A549 (cell line): ENCODE measurements at regions of chr3 and their contacts with region 1.

Region 1: DNA sequence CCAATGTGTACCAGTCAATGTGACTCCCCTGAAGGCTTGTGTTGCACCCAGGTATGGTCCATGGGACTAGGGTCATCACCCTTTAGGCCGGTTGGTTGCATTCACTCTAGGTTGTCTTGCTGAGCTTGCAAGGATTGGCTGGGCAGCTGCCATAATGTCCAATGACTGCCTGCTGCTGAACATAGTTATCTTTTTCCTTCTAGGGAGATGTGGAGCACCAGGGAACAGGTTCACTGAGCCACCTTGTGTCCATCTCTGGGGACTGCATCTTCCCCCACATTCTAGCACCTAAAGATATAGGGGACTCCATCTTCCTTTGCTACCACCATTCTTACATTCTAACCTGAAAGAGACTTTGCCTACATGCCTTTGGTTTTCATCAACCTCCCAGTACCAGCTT is 580.4 kb upstream of the TBL1XR1 start:
- DNase-seq: peak; percentile 2 to 31
- ATAC-seq: peak in 1 of 2 experiments; percentile 73; a peak in 3 of 6 replicates
- H3K4me3 ChIP-seq: no peak overlapping the region
- H3K27ac ChIP-seq: no peak overlapping the region
- H3K4me1 ChIP-seq: 0 out of 3 replicates have a peak, but pooled peaks cover 5% of the 10 kb centered on the region
- CTCF ChIP-seq: peak; percentile 16; the same call in 2 of the 3 replicates
- EP300 ChIP-seq: no peak
- POLR2A ChIP-seq: no peak
- RAD21 ChIP-seq: peak; percentile 35 to 61; a peak in 3 of 5 replicates

Region 2: GRCh38 chr3:177498037-177498856 is 279.5 kb before region 1 on chr3:
- CTCF ChIA-PET with region 1: no interaction called
- POLR2A ChIA-PET with region 1: interaction called, 10 read pairs
- DNase-seq: peak; percentile 10 to 36
- ATAC-seq: peak in 1 of 2 experiments; percentile 70; a peak in 2 of 6 replicates
- H3K4me3 ChIP-seq: no peak overlapping the region
- H3K27ac ChIP-seq: peak overlapping the region in 1 of 2 experiments; percentile 55; a peak in 2 of 6 replicates
- H3K4me1 ChIP-seq: peaks cover 6% of the 10 kb centered on the region; the same call in 1 of the 3 replicates
- CTCF ChIP-seq: no peak
- EP300 ChIP-seq: no peak
- POLR2A ChIP-seq: no peak
- RAD21 ChIP-seq: no peak